GM12878 (cell line): ENCODE measurements at regions of chr1 and their contacts with region 1.

Region 1: DNA sequence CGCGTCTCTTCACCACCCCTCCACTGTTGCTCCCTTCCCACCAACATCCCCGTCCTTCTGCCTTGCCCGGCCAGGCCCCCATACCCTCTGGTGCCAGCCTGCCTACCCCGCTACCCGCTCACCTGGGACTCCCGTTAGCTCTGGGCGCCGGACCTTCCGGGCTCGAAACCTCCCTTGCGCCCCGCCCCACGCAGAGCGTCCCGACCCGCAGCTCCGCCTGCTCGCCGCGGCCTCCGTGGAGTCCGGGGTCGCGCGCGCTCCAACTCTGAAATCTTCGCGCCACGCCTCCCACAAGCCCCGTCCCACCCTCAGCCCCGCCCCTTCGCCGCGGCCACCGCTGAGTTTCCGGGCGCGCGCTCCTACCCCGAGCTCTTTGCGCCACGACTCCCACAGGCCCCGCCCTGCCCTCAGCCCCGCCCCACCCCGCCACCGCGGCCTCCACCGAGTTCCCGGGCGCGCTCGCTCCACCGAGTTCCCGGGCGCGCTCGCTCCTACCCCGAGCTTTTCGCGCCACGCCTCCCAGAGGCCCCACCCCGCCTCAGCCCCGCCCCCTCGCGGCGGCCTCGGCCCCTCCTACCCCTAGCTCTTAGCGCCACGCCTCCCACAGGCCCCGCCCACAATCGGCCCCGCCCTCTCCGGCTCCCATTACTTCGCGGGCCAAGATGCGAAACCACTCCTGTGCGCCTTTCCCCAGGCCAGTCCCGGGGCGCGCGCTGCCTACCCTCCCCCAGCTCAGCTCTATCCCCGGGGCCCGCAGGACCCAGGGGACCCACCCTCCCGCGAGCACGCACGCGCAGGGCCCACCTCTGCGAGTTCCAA is at the start of gene IFT25:
- DNase-seq: peak; percentile 77
- ATAC-seq: peak; percentile 88
- H3K4me3 ChIP-seq: peak within 1 kb of the TSS; percentile 92
- H3K27ac ChIP-seq: peak within 1 kb of the TSS; percentile 78
- H3K4me1 ChIP-seq: peaks cover 3% of the 10 kb centered on the region; the same call in 1 of the 2 replicates
- H3K27me3 ChIP-seq: no peaks in the 10 kb centered on the region
- CTCF ChIP-seq: no peak
- EP300 ChIP-seq: no peak
- POLR2A ChIP-seq: peak; percentile 91
- RAD21 ChIP-seq: no peak
- polyA plus RNA-seq, gene IFT25: 202 to 242 TPM

Region 2: DNA sequence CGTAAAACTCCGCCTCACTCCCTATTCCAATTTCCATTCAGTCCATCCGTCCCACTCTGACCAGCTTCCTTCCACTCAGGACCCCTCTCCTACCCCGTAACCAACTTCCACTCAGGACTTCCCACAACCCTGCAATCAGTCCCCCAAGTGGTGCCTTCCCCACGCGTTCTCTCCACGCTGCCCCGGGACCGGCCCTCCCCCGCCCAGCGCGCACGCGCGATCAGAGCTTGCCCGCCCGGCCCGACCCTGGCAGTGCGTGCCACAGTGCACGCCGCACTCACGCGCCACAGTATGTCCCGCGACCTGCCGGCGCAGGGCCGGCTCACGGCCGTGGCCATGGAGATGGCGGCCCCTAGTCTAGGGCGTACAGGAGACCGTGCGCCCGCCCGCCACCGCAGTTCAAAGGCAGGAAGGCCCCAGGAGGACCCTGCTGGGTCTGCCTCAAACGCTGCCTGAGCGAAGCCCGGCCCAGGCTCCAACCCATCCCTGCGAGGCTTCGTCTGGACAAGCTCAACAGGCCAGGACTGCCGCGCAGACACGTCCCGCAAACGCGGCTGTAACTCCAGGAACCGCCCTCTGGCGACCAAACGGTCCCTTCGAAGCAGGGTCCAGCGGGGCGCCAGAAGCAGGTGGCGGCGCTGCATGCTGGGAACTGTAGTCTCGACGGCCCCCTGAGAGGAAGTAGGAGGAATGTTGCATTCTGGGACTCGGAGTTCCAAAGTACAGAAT is 107.6 kb before region 1 on chr1 and contains the start of gene NDC1:
- CTCF ChIA-PET with region 1: interaction called, 4 read pairs
- POLR2A ChIA-PET with region 1: interaction called, 16 read pairs
- RAD21 ChIA-PET with region 1: interaction called, 4 read pairs
- SMC1A ChIA-PET with region 1: interaction called, 4 read pairs
- in situ Hi-C with region 1: no loop called
- intact Hi-C with region 1: no loop called
- DNase-seq: peak; percentile 91
- ATAC-seq: peak; percentile 92
- H3K4me3 ChIP-seq: peak within 1 kb of the TSS; percentile 88
- H3K27ac ChIP-seq: peak within 1 kb of the TSS; percentile 99
- H3K4me1 ChIP-seq: peaks cover 7% of the 10 kb centered on the region; the same call in 1 of the 2 replicates
- H3K27me3 ChIP-seq: no peaks in the 10 kb centered on the region
- CTCF ChIP-seq: peak; percentile 10 to 20 (median 14); a peak in 1 of 6 replicates
- EP300 ChIP-seq: peak; percentile 6 to 38; a peak in 1 of 4 replicates
- POLR2A ChIP-seq: peak; percentile 94
- RAD21 ChIP-seq: no peak
- polyA plus RNA-seq, gene NDC1: 20.2 to 24.9 TPM

Region 3: DNA sequence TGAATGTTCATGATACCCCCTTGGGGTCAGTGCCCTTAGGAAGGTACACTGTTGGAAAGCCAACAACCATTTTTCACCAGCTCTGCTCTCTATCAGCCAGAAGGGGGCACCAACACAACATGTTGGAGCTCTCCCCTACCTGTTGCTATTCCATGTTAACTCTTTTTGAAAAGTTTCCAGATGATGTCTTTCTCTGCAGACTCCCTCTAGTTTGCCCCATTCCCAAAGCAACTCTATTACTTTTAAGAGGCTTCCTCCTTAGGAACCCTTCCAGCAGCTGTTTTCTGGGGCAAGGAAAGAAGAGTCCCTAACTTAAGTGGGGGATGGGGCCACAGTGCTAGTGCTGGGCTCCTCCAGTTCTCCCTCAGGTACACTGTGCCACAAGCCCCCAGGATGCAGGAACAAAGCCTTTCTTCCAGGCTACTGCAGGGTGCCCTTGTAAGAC is 84.7 kb before region 1 on chr1:
- CTCF ChIA-PET with region 1: interaction called, 200 read pairs
- POLR2A ChIA-PET with region 1: interaction called, 6 read pairs
- RAD21 ChIA-PET with region 1: interaction called, 73 read pairs
- SMC1A ChIA-PET with region 1: interaction called, 95 read pairs
- in situ Hi-C with region 1: no loop called
- intact Hi-C with region 1: loop called (anchors 1 kb)
- DNase-seq: no peak
- ATAC-seq: peak; percentile 95
- H3K4me3 ChIP-seq: no peak overlapping the region
- H3K27ac ChIP-seq: no peak overlapping the region
- H3K4me1 ChIP-seq: no peaks in the 10 kb centered on the region; the same call in 1 of the 2 replicates
- H3K27me3 ChIP-seq: no peaks in the 10 kb centered on the region
- CTCF ChIP-seq: peak; percentile 83 to 88 (median 86)
- EP300 ChIP-seq: no peak
- POLR2A ChIP-seq: no peak
- RAD21 ChIP-seq: peak; percentile 91

Region 4: GRCh38 chr1:53878492-53879105 is 67.0 kb before region 1 on chr1:
- CTCF ChIA-PET with region 1: interaction called, 198 read pairs
- POLR2A ChIA-PET with region 1: interaction called, 5 read pairs
- RAD21 ChIA-PET with region 1: interaction called, 34 read pairs
- SMC1A ChIA-PET with region 1: interaction called, 68 read pairs
- in situ Hi-C with region 1: no loop called
- intact Hi-C with region 1: loop called (anchors 1 kb)
- DNase-seq: no peak
- ATAC-seq: peak; percentile 60; the same call in 2 of the 3 replicates
- H3K4me3 ChIP-seq: no peak overlapping the region
- H3K27ac ChIP-seq: no peak overlapping the region
- H3K4me1 ChIP-seq: no peaks in the 10 kb centered on the region
- H3K27me3 ChIP-seq: no peaks in the 10 kb centered on the region
- CTCF ChIP-seq: peak; percentile 48 to 55 (median 54)
- EP300 ChIP-seq: no peak
- POLR2A ChIP-seq: no peak
- RAD21 ChIP-seq: peak; percentile 67

Region 5: DNA sequence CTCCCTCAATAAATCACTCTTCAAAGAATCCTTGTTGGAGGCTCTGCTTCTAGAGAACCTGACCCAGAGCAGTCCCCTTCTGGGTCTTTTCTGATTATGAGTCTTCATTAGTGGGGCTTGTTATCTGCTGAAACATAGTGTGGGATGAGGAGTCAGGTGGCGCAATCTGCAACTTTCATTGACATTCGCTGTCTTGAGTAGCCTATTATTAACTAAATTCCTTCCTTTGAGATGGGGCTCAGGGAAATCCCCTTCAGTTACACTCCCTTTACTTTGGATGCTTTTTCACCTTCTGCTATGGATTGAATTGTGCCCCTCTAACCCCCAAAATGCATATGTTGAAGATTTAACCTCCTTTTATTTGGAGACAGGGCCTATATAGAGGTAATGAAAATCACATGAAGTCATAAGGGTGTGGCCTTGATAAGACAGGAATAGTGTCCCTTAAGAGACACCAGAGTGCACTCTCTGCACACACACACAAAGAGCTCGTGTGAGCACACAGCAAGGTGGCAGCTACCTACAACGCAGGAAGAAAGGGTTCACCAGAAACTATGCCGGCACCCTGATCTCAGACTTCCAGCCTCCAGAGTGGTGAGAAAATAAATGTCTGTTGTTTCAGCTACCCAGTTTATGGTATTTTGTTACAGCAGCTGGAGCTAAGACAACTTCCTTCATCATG is 32.1 kb before region 1 on chr1:
- CTCF ChIA-PET with region 1: interaction called, 6 read pairs
- POLR2A ChIA-PET with region 1: no interaction called
- RAD21 ChIA-PET with region 1: interaction called, 4 read pairs
- SMC1A ChIA-PET with region 1: interaction called, 13 read pairs
- in situ Hi-C with region 1: no loop called
- intact Hi-C with region 1: no loop called
- DNase-seq: no peak
- ATAC-seq: no peak
- H3K4me3 ChIP-seq: no peak overlapping the region
- H3K27ac ChIP-seq: no peak overlapping the region
- H3K4me1 ChIP-seq: no peaks in the 10 kb centered on the region
- H3K27me3 ChIP-seq: no peaks in the 10 kb centered on the region
- CTCF ChIP-seq: peak in 1 of 3 experiments; percentile 18; a peak in 1 of 6 replicates
- EP300 ChIP-seq: no peak
- POLR2A ChIP-seq: no peak
- RAD21 ChIP-seq: peak; percentile 2; the same call in 1 of the 2 replicates

Region 6: DNA sequence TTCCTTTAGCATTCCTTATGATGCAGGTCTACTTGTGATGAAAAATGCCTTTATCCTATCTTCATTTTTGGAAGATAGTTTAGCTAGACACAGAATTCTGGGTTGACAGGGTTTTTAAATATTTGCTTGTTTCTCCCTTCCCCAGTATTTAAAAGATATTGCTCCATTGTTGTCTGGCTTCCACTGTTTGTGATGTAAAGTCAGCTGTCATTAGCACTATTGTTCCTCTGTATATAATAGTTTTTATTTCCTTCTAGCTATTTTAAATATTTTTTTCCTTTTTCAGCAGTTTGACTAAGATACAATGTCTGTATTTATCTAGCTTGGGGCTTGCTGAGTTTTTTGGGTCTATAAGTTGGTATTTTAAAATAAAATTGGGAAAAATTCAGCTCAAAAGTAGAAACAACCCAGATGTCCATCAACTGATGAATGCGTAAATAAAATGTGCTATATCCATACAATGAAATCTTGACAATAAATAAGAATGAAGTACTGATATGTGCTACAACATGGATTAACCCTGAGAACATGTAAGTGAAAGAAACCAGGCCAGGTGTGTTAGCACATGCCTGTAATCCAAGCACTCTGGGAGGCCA is 11.4 kb before region 1 on chr1:
- CTCF ChIA-PET with region 1: interaction called, 9 read pairs
- POLR2A ChIA-PET with region 1: interaction called, 7 read pairs
- RAD21 ChIA-PET with region 1: interaction called, 7 read pairs
- SMC1A ChIA-PET with region 1: interaction called, 14 read pairs
- in situ Hi-C with region 1: no loop called
- intact Hi-C with region 1: no loop called
- DNase-seq: no peak
- ATAC-seq: no peak
- H3K4me3 ChIP-seq: no peak overlapping the region
- H3K27ac ChIP-seq: no peak overlapping the region
- H3K4me1 ChIP-seq: no peaks in the 10 kb centered on the region
- H3K27me3 ChIP-seq: no peaks in the 10 kb centered on the region
- CTCF ChIP-seq: no peak
- EP300 ChIP-seq: no peak
- POLR2A ChIP-seq: no peak
- RAD21 ChIP-seq: no peak

Region 7: DNA sequence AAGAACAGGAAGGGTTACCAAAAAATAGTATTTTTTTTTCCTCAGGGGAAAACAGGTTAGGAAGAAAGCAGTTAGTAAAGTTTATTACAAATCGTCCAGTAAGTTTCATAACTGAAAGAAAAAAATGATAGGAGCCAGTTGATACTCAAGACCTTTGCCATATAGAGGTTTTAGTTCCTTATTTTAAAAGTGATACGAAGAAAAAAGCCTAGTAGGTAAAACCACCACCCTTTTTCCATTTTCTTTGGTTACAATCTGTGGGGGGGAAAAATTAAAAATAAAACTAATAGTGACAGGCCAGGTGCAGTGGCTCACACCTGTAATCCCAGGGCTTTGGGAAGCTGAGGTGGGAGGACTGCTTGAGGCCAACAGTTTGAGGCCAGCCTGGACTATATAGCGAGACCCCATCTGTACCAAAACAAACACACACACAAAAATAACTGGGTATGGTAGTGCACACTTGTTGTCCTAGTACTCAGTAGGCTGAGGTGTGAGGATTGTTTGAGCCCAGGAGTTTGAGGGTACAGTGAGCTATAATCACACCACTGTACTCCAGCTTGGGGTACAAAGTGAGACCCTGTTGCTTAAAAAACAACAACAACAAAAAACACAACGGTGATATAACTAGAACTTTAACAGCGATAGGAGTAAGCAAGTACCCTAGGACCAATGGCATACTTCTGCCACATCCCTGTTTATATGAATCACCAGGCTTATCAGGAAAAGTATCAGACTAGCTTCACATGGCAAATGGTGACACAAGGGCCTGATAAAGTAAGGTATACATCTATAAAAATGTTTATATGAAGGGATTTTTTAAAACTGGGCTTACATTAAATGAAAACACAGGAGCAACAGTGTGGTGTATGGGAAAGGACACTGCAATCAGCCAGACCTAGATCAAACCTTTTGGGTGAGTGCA is 102.0 kb after region 1 on chr1:
- CTCF ChIA-PET with region 1: interaction called, 5 read pairs
- POLR2A ChIA-PET with region 1: interaction called, 32 read pairs
- RAD21 ChIA-PET with region 1: interaction called, 13 read pairs
- SMC1A ChIA-PET with region 1: interaction called, 8 read pairs
- in situ Hi-C with region 1: no loop called
- intact Hi-C with region 1: loop called (anchors 2 kb)
- DNase-seq: no peak
- ATAC-seq: peak; percentile 67
- H3K4me3 ChIP-seq: peak overlapping the region; percentile 39; the same call in 1 of the 2 replicates
- H3K27ac ChIP-seq: peak overlapping the region; percentile 50
- H3K4me1 ChIP-seq: peaks cover 18% of the 10 kb centered on the region
- H3K27me3 ChIP-seq: no peaks in the 10 kb centered on the region
- CTCF ChIP-seq: no peak
- EP300 ChIP-seq: no peak
- POLR2A ChIP-seq: no peak
- RAD21 ChIP-seq: no peak